ENCODE measurements at regions of chr10 and their contacts with region 1.

Region 1: DNA sequence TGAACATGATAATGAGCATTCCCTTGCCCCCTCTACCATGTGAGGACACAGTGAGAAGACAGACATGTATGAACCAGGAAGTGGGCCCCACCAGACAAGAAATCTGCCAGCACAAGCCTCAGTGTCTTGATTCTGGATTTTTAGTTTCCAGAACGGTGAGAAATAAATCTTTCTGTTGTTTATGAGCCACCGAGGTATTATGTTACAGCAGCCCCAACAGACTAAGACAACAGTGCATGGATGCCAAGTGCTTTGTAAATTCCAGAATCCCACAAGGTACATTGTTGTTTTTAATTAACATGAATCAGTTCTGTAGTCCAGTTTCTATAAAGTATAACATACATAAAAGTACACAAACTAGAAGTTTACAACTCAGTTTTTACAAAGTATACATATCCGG is 162.2 kb downstream of the ARHGAP21 start:
- DNase-seq: no peak

Region 2: GRCh38 chr10:23556727-23557440 is 1004.6 kb before region 1 on chr10:
- intact Hi-C with region 1: loop called in 1 of 2 experiments (anchors 10 kb)
- DNase-seq: no peak

Region 3: GRCh38 chr10:24483489-24484100 is 77.9 kb before region 1 on chr10:
- intact Hi-C with region 1: no loop called
- DNase-seq: no peak

Region 4: GRCh38 chr10:24625778-24626177 is 64.3 kb after region 1 on chr10:
- intact Hi-C with region 1: no loop called
- DNase-seq: no peak

Region 5: DNA sequence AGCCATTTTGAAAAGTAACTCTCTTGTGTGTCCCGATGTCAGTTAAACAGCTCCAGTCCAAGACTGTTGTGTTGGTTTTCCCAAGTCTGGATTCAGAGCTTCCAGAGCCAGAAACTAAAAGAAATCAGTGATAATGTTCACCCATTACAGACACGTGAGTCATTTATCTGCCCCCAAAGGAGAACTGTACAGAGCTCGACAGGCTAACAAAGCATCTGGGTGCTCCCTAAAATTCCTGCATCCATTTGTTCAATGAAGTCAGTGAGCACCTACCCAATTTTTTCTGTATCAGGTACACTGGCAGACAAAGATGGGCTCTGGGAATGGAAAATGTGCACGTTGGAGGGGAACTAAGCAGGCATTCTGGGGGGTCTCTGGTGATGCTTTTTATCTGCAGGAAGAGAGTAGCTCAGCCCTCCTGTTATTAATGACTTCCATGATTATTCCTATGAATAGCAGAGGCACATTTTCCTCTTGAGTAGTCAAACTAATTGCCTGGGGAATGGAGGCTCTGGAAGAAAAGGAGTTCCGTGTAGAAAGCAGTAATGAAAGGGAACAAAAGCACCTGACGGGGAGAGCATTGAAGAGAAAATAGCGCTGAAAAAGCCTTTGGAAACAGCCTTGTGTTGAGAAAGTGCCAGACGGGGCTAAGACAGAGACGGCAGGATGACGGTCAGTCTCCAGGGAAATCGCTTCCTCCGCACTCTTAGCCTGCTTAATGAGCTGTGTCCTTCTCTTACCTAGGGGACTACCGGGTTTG is 1730.4 kb after region 1 on chr10:
- intact Hi-C with region 1: no loop called
- DNase-seq: no peak